K562 (cell line): ENCODE measurements at regions of chr3 and their contacts with region 1.

Region 1: DNA sequence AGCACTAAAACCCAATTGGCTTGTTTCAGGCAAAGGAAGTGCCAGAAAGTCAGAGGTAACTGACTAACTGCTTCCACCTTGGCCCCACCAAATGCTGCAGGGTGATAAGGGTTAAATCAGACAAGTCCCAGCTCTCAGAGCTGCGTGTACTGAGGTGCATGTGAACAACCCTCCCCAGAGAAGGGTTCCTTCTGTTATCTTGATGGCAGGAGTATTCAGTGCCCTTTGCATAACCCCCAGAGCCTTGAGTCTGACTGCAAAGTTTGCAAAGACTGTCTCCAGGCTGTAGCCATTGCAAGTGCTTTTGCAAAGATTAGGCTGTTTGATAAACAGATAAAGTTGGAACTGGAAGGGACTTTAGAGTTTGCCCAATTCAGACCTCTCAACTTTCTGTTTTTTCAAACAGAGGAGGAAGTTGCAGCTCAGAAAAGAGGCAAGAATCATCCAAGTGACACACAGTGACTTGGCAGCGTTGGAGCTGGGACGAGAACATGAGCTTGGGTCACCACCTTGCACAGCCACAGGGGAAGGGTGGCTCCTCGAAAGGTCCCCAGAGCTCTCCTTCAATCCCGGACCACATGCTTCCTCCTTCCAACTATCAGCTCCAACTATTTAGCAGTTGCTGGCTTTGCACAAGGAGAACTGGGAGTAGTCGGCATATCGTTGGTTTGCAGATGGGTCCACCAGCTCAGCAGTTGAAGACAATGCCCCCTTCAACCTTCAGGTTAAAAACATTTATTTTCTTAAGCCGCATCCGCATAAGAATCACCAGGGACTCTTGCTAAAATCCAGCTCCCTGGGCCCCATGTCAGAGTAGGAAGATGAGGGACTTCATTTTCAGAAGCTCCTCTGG is 224.8 kb upstream of the HES1 start:
- DNase-seq: peak; percentile 48 to 93 (median 68)
- ATAC-seq: peak; percentile 88
- H3K4me3 ChIP-seq: peak overlapping the region; percentile 18; the same call in 1 of the 2 replicates
- H3K27ac ChIP-seq: peak overlapping the region; percentile 92
- H3K4me1 ChIP-seq: peaks cover 30 to 55% of the 10 kb centered on the region in 2 experiments
- H3K27me3 ChIP-seq: no peaks in the 10 kb centered on the region
- CTCF ChIP-seq: no peak; a peak in 1 of 6 replicates
- EP300 ChIP-seq: peak; percentile 97
- POLR2A ChIP-seq: no peak; the same call in 1 of the 2 replicates
- RAD21 ChIP-seq: peak; percentile 60 to 61; a peak in 3 of 4 replicates

Region 2: GRCh38 chr3:193794002-193794881 is 116.9 kb before region 1 on chr3:
- CTCF ChIA-PET with region 1: no interaction called
- POLR2A ChIA-PET with region 1: no interaction called
- in situ Hi-C with region 1: no loop called
- intact Hi-C with region 1: loop called (anchors 2 kb)
- DNase-seq: peak; percentile 49 to 83 (median 62)
- ATAC-seq: peak; percentile 90
- H3K4me3 ChIP-seq: no peak overlapping the region
- H3K27ac ChIP-seq: peak overlapping the region; percentile 55; the same call in 1 of the 3 replicates
- H3K4me1 ChIP-seq: peaks cover 3 to 23% of the 10 kb centered on the region in 2 experiments; a peak in 3 of 5 replicates
- H3K27me3 ChIP-seq: no peaks in the 10 kb centered on the region
- CTCF ChIP-seq: peak in 2 of 3 experiments; percentile 34 to 42; a peak in 3 of 6 replicates
- EP300 ChIP-seq: peak; percentile 88
- POLR2A ChIP-seq: no peak
- RAD21 ChIP-seq: peak; percentile 33 to 61

Region 3: DNA sequence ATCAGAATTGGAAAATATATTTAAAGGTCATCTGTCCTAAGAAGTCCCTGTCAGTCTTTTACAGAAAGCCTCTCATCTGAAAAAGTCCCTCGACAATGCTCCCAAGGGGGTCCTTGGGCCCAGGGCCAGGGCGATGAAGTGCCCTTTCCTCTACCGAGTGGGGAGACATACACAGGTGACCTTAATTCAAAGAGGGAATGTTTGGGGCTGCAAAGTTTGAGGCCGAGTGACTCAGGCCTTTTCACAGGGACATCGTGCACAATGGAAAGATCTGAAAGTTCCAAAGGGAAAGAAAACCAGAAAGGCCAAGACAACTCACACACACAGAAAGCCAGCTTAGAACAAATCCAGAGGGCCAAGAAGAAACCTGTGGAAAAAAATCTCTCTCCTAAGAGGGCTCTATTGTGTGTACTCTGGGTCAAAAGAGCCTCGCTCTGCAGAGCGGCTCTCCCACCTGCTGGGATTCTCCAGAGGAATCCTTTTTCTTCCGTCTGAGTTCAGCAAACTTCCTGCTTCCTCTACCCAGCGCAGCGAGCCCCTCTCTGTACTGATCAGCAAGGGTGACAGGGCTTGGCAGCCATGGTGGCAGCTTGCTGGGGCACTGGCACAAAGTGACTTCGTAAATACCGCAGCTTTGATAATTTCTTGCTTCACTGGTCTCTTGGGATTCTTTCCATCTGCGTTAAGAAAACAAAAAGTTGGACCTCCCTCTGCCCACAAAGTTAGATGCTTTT is 59.0 kb before region 1 on chr3:
- CTCF ChIA-PET with region 1: no interaction called
- POLR2A ChIA-PET with region 1: interaction called, 4 read pairs
- in situ Hi-C with region 1: no loop called
- intact Hi-C with region 1: loop called (anchors 5 kb)
- DNase-seq: no peak
- ATAC-seq: no peak; the same call in 1 of the 3 replicates
- H3K4me3 ChIP-seq: no peak overlapping the region
- H3K27ac ChIP-seq: peak overlapping the region; percentile 59
- H3K4me1 ChIP-seq: peaks cover 11 to 53% of the 10 kb centered on the region in 2 experiments; a peak in 4 of 5 replicates
- H3K27me3 ChIP-seq: no peaks in the 10 kb centered on the region
- CTCF ChIP-seq: no peak
- EP300 ChIP-seq: no peak
- POLR2A ChIP-seq: no peak
- RAD21 ChIP-seq: no peak

Region 4: DNA sequence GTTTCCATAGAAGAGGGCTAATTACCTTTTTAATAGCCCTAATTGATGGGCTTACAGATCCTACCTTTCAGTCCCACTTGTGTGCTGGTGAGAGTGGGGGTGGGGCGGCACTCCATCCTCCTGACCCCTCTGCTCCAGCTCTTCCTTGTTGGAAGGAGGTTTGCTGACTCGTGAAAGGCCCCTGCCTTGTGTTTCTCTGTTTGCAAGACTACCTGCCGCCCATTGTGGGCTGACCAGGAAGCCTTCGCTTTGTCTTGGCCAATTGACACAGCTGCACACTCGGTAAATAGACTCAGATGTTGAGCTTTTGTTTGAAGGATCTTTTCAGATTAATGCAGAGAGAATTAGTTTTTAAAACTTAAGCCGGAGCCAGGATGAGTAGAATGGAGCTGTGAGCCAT is 27.5 kb after region 1 on chr3:
- CTCF ChIA-PET with region 1: no interaction called
- POLR2A ChIA-PET with region 1: no interaction called
- in situ Hi-C with region 1: no loop called
- intact Hi-C with region 1: loop called (anchors 2 kb)
- DNase-seq: peak in 2 of 4 experiments; percentile 24 to 41
- ATAC-seq: peak; percentile 6; the same call in 1 of the 3 replicates
- H3K4me3 ChIP-seq: no peak overlapping the region
- H3K27ac ChIP-seq: peak overlapping the region; percentile 39; the same call in 2 of the 3 replicates
- H3K4me1 ChIP-seq: peaks cover 21 to 45% of the 10 kb centered on the region in 2 experiments
- H3K27me3 ChIP-seq: no peaks in the 10 kb centered on the region
- CTCF ChIP-seq: no peak
- EP300 ChIP-seq: no peak
- POLR2A ChIP-seq: no peak
- RAD21 ChIP-seq: no peak

Region 5: DNA sequence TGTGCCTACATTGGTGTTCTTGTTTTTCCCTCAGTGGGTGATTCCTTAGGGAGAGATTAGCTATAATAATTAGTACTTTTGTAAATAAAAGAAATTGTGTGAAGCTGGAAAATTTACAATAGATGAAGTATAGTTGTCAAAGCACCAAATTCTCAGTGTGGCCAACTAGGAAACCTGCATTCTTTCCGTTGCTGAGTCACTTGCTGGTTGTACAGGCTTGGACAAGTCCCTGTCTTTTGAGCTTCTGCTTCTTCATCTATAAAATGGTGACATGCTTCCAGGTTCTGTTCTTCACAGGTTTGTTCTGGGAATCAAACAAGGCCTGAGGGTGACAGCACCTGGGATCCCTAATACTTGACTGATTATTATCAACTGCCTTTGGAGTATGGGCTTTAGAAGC is 40.7 kb after region 1 on chr3:
- CTCF ChIA-PET with region 1: no interaction called
- POLR2A ChIA-PET with region 1: no interaction called
- in situ Hi-C with region 1: no loop called
- intact Hi-C with region 1: no loop called
- DNase-seq: no peak
- ATAC-seq: peak; percentile 51; the same call in 2 of the 3 replicates
- H3K4me3 ChIP-seq: no peak overlapping the region
- H3K27ac ChIP-seq: no peak overlapping the region
- H3K4me1 ChIP-seq: no peaks in the 10 kb centered on the region
- H3K27me3 ChIP-seq: no peaks in the 10 kb centered on the region
- CTCF ChIP-seq: no peak
- EP300 ChIP-seq: no peak
- POLR2A ChIP-seq: no peak
- RAD21 ChIP-seq: no peak